K562 (cell line): ENCODE measurements at regions of chr12 and their contacts with region 1.

Region 1: DNA sequence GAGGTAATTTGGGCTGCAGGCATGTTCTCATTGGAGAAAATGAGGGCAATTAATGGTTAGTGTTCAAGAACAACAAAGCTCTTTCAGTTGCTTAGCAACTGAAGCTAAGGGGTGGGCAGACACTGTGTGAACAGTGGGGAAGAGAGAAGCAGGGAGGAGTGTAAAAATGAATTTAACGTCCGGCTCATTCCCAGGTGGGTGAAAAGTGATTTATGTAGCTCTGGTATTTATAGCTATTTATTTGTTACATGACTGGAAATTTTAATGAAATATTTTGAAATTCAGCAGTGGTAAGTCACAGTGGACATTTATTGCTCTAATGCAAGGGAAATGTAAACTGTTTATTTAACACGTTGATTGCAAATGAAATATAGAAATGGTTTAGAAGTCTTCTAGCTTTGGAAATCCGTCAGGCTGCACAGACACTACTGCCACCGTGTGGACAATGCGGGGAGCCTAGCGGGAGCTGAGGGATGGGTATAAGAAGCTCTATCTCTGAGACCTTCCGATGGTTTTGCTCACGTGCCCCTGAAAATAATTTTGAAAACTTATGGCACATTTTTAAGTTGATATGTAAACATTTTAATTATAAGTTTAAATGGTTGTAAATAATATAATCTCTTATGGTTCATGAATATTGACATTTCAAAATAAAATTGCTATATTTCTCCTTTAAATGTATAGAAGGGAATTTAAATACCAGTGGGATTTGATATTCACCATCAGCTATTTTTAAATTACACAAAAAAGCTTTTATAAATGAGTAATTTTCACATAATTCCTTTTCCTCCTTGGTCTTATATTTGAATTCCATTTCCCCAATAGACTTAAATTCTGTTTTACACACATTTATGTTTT is 54.4 kb downstream of the E2F7 start:
- DNase-seq: peak; percentile 70 to 81 (median 72)
- ATAC-seq: peak; percentile 96
- H3K4me3 ChIP-seq: no peak overlapping the region
- H3K27ac ChIP-seq: no peak overlapping the region
- H3K4me1 ChIP-seq: no peaks in the 10 kb centered on the region; a peak in 1 of 5 replicates
- H3K27me3 ChIP-seq: peaks cover 0 to 3% of the 10 kb centered on the region in 2 experiments; a peak in 2 of 5 replicates
- CTCF ChIP-seq: peak; percentile 84 to 92 (median 85)
- EP300 ChIP-seq: no peak
- POLR2A ChIP-seq: no peak
- RAD21 ChIP-seq: peak; percentile 62 to 76

Region 2: DNA sequence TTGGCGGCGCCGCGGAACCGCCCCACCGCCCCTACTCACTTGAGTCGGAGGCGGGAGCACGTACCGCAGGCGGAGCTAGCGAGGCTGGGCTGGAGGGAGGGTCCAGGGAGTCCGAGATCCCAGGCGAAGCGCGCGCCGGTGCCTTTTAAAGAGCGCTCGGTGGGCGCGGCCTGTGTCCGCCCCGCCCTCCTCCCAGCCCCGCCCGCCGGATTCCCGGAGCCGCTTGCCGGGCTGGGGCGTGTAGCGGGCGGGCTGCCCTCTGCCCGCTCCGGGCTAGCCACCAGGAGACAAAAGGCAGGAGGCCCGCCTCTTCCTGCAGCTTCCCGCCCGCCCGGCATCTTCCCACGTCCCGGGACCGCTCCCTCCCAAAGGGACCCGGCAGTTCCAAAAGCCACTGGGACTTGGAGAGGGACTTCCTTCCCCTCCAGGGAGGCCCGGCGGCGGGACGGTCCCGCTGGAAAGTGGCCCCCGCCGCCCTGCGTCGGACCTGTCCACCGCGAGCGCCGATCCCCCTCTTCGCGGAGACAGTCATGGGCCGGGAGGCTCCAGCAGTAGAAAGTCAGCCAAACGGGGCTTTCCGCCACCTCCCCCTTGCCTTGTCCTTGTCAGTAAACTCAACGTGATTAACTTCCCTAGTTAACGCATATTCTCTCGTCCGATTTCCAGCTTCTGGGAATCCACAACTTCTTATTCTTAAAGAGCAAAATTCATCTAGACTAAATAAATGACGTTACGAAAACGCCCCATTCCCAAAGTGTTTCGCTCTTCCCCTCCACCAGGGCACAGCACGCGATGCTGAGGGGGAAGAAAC is 131.8 kb before region 1 on chr12 and contains the start of gene CSRP2:
- CTCF ChIA-PET with region 1: interaction called, 3 read pairs
- POLR2A ChIA-PET with region 1: no interaction called
- in situ Hi-C with region 1: no loop called
- intact Hi-C with region 1: loop called (anchors 5 kb)
- DNase-seq: peak; percentile 87 to 92 (median 90)
- ATAC-seq: peak; percentile 98
- H3K4me3 ChIP-seq: peak within 1 kb of the TSS; percentile 58
- H3K27ac ChIP-seq: no peak within 1 kb of the TSS
- H3K4me1 ChIP-seq: peaks cover 0 to 16% of the 10 kb centered on the region in 2 experiments; a peak in 3 of 5 replicates
- H3K27me3 ChIP-seq: no peaks in the 10 kb centered on the region; a peak in 1 of 5 replicates
- CTCF ChIP-seq: no peak
- EP300 ChIP-seq: no peak
- POLR2A ChIP-seq: no peak
- RAD21 ChIP-seq: no peak
- polyA plus RNA-seq, gene CSRP2: 4.1 to 6.2 TPM

Region 3: DNA sequence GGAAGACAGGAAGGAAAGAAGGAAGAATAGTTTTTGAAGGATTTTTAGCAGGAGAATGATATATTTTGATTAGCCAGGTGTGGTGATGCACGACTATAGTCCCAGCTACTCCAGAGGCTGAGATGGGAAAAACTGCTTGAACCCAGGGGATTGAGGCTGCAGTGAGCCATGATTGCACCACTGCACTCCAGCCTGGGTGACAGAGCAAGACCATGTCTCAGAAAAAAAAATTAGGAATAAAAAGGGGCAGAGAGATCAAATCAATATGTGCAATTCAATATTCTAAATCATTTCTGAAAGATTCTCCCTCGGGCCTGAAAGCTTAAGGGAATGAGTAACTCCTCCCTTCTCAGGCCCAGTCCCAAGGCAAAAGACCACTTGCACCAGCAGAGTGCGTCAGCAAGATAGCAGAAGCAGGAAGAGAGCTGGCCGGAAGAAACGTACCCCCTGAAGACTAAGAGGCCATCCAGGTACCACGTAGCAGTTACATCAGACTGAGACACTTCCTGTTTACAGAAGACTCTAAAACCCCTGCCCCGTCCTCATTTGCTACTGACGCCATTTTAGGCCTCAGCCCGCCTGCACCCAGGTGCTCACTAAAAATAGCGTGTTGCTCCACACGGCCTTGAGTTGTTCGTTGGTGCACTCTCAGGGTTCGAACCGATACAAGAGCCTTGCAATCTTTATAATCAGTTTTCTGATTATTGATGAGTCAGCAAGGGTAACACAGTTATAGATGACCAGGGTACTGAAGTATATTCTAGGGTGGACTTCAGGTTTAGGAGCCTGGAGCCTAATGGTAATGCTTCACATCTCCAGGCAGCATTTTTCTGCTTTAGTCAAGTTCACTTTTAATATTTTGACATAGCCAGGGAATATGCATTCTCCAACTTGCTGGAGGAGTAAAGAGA is 74.4 kb before region 1 on chr12:
- CTCF ChIA-PET with region 1: no interaction called
- POLR2A ChIA-PET with region 1: no interaction called
- in situ Hi-C with region 1: no loop called
- intact Hi-C with region 1: loop called (anchors 5 kb)
- DNase-seq: peak in 2 of 4 experiments; percentile 17 to 26
- ATAC-seq: peak; percentile 73
- H3K4me3 ChIP-seq: no peak overlapping the region
- H3K27ac ChIP-seq: peak overlapping the region; percentile 21; the same call in 1 of the 3 replicates
- H3K4me1 ChIP-seq: peaks cover 0 to 5% of the 10 kb centered on the region in 2 experiments; a peak in 2 of 5 replicates
- H3K27me3 ChIP-seq: no peaks in the 10 kb centered on the region; a peak in 1 of 5 replicates
- CTCF ChIP-seq: no peak
- EP300 ChIP-seq: no peak
- POLR2A ChIP-seq: no peak
- RAD21 ChIP-seq: no peak